ENCODE measurements at regions of chr9 and their contacts with region 1.

Region 1: DNA sequence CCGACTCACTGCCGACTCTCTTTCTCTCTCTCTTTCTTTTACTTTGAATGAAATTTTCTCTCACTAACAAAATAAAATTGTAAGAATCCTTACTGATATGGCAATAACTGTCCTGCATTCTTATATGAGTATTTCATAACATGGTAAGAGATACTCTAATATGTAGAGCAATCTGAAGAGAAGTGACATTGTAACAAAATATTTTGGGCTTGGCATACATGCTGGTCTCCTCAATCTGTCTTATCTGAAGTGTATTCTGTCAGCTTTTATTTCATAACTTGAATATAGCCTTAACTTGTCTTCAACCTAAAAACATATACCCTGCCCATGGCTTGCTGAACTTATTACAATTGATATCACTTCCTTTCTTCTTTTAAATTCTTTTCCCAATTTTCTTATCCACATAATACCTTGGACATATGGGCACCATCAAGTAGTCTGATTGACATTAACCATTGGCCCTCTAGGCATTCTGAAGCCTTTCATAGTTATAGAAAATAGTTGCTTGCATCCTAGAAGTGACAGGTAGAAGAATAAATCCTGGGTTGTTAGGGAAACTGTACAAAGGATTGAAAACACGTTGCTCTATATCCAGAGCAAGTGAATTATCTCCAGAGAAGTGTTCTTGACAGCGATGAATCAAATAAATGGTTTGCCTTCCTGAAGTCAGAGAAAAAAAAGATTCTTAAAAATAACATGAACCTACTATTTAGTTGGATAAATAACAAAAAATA is 537.6 kb upstream of the TYRP1 start:
- DNase-seq: no peak
- ATAC-seq: no peak
- H3K4me3 ChIP-seq: no peak overlapping the region
- H3K4me3 Mint-ChIP-seq: no peak overlapping the region
- H3K27ac ChIP-seq: no peak overlapping the region
- H3K27ac Mint-ChIP-seq: no peak overlapping the region
- H3K4me1 ChIP-seq: no peaks in the 10 kb centered on the region
- H3K4me1 Mint-ChIP-seq: no peaks in the 10 kb centered on the region
- H3K27me3 ChIP-seq: no peaks in the 10 kb centered on the region
- H3K27me3 Mint-ChIP-seq: no peaks in the 10 kb centered on the region

Region 2: DNA sequence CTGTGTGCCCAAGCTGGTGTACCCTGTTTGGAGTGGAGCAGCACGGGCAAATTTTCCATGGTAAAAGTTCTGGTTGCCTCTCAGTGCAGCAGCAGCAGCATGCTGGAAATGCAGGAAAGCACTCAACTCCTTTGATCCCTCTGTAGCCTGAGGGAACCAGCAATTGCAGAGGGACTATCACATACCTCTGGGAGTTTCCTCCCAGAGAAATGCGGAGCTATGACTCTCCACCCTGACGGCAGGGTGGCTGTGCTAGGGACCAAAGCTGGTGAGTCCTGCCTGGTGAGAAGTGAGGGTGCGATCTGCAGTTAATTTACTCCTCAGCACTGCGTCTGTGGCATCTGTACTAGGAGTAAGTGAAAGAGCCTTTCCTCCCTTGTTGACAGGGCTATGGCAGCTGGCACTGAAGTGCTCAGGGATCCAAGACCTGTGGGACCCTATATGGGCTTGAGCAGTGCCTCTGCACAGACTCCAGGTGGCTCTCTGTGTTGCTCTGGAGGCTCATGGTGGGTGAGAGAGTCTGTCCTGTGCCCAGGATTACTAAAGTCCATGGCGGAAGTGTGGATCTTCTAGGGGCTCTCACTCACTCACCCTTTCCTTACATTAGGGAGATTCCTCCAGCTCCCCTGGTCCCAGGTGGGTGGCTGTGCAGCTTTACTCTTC is 63.6 kb before region 1 on chr9:
- CTCF ChIA-PET with region 1: no interaction called
- POLR2A ChIA-PET with region 1: no interaction called
- intact Hi-C with region 1: loop called in 1 of 2 experiments (anchors 10 kb)
- DNase-seq: no peak
- ATAC-seq: no peak
- H3K4me3 ChIP-seq: no peak overlapping the region
- H3K4me3 Mint-ChIP-seq: no peak overlapping the region
- H3K27ac ChIP-seq: no peak overlapping the region
- H3K27ac Mint-ChIP-seq: no peak overlapping the region
- H3K4me1 ChIP-seq: no peaks in the 10 kb centered on the region
- H3K4me1 Mint-ChIP-seq: no peaks in the 10 kb centered on the region
- H3K27me3 ChIP-seq: no peaks in the 10 kb centered on the region
- H3K27me3 Mint-ChIP-seq: no peaks in the 10 kb centered on the region